Activated naive CD4-positive, alpha-beta T cell treated with anti-CD3 and anti-CD28 coated beads for 36 hours (primary cell): ENCODE measurements at regions of chr6 and their contacts with region 1.

Region 1: DNA sequence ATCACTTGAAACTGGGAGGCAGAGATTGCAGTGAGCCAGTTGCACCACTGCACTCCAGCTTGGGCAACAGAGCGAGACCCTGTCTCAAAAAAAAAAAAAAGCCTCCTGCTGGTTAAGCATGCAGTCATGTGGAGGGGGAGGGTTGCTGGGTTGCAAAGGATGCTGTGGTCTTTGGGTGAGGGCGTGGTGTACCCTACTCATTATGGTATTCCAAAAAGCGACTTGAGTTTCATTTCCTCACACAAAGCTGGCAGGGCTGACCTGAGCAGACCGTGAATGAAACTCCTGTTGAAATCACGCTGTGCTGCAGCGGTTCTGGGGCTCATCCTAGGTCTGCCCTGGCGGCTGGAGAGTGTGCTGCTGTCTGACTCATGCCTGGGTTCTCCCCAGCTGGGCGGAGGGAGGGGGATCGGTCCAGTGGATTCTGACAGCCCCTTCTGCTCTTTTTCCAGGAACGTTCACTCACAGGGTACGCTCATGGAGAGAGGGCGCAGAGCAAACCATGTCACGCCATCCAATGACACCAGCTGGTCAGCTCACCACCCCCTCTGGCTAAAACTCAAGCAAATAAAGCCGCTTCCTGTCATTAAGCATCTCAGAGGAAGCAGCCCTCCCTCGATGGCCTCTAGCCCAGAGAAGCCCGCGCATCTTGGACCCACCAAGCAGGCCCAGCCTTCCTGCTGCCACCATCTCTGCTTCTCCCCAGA is 166.2 kb downstream of the SCML4 start:
- DNase-seq: peak; percentile 76
- H3K4me3 Mint-ChIP-seq: no peak overlapping the region
- H3K27ac Mint-ChIP-seq: peak overlapping the region; percentile 9
- H3K4me1 Mint-ChIP-seq: peaks cover 20% of the 10 kb centered on the region
- H3K27me3 Mint-ChIP-seq: peaks cover 3% of the 10 kb centered on the region

Region 2: DNA sequence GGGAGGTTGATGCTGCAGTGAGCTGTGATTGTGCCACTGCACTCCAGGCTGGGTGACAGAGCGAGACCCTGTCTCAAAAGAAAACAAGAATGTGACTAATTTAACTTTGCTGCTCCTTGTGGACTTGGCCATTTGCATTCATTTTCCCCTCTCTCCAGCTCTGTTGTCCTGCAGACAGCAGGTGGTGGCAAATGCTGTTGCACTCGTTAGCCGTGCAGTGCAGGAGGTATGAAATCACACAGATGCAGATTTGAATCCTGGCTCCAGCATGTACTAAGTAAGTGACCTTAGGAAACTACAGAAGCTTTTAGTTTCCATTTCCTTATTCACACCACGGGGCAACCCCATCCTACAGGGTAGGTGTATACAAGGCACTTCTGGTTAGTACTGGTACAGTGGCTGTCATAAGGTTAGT is 533.0 kb before region 1 on chr6:
- CTCF ChIA-PET with region 1: no interaction called
- intact Hi-C with region 1: loop called (anchors 5 kb)
- DNase-seq: no peak
- H3K4me3 Mint-ChIP-seq: no peak overlapping the region
- H3K27ac Mint-ChIP-seq: no peak overlapping the region
- H3K4me1 Mint-ChIP-seq: no peaks in the 10 kb centered on the region
- H3K27me3 Mint-ChIP-seq: no peaks in the 10 kb centered on the region

Region 3: DNA sequence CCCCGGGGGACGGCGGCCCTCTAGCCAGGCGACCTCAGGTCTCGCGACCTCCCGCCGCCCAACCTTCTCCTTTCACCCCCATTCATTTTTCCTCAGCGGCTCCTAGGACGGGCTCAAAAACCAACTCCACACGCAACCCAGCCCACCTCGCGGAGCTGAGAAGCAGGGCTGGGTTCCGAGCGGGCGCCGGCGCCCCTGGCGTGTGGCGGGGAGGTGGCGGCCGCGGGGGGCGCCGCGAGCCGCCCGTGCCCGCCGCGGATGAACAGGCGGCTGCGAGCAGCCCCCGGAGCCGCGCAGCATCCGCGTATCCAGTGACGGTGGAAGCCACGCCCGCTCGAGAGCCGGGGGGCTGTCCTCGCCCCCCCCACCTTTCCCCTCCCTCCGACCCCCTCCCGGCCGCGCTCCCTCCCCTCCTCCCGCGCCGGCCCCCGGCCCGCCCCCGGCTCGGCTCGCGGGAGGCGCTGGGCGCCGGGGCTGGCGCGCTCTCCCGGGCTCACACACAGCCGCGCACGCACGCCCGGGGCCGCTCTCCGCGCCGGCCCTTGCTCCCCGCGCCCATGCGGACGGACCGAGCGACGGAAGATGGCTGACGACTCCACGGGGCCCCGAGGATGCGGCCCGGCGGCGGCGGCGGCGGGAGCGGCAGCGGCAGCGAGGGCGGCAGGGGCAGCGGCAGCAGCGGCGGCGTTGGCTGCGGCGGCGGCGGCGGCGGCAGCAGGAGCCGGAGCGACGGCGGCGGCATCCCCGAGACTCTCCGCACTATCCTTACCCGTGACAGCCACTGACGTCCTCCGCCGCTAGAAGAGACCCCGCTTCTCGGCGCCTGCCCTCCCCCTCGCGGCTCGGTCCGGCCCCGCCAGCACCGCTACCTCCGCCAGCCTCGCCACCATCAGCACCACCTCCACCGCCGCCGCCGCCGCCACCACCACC is 168.0 kb before region 1 on chr6 and contains the start of gene SOBP:
- CTCF ChIA-PET with region 1: no interaction called
- intact Hi-C with region 1: loop called (anchors 2 kb)
- DNase-seq: peak; percentile 28
- H3K4me3 Mint-ChIP-seq: peak within 1 kb of the TSS; percentile 80
- H3K27ac Mint-ChIP-seq: no peak within 1 kb of the TSS
- H3K4me1 Mint-ChIP-seq: peaks cover 12% of the 10 kb centered on the region
- H3K27me3 Mint-ChIP-seq: peaks cover 46% of the 10 kb centered on the region
- total RNA-seq, gene SOBP: 0.25 to 0.26 TPM